ENCODE measurements at regions of chr9 and their contacts with region 1.

Region 1: GRCh38 chr9:97468658-97469448 is 32.6 kb upstream of the TMOD1 start:
- DNase-seq: peak; percentile 46 to 79
- H3K4me3 ChIP-seq: no peak overlapping the region
- H3K27ac ChIP-seq: no peak overlapping the region
- H3K4me1 ChIP-seq: no peaks in the 10 kb centered on the region
- H3K27me3 ChIP-seq: no peaks in the 10 kb centered on the region
- CTCF ChIP-seq: peak; percentile 90 to 96 (median 93)
- EP300 ChIP-seq: no peak
- POLR2A ChIP-seq: no peak
- RAD21 ChIP-seq: peak; percentile 100

Region 2: GRCh38 chr9:97419309-97419867 is 49.5 kb before region 1 on chr9:
- CTCF ChIA-PET with region 1: interaction called, 15 read pairs
- POLR2A ChIA-PET with region 1: no interaction called
- DNase-seq: no peak
- H3K4me3 ChIP-seq: no peak overlapping the region
- H3K27ac ChIP-seq: no peak overlapping the region
- H3K4me1 ChIP-seq: no peaks in the 10 kb centered on the region
- H3K27me3 ChIP-seq: no peaks in the 10 kb centered on the region
- CTCF ChIP-seq: no peak
- EP300 ChIP-seq: no peak
- POLR2A ChIP-seq: no peak
- RAD21 ChIP-seq: no peak

Region 3: GRCh38 chr9:97501177-97501971 is 32.5 kb after region 1 on chr9 and contains the start of gene TMOD1:
- CTCF ChIA-PET with region 1: interaction called, 53 read pairs
- POLR2A ChIA-PET with region 1: interaction called, 3 read pairs
- DNase-seq: peak in 1 of 2 experiments; percentile 80
- H3K4me3 ChIP-seq: peak within 1 kb of the TSS; percentile 50 to 69 (median 60)
- H3K27ac ChIP-seq: no peak within 1 kb of the TSS
- H3K4me1 ChIP-seq: peaks cover 0 to 6% (median 5%) of the 10 kb centered on the region in 4 experiments; a peak in 5 of 7 replicates
- H3K27me3 ChIP-seq: peaks cover 39 to 60% (median 50%) of the 10 kb centered on the region in 4 experiments
- CTCF ChIP-seq: peak in 2 of 3 experiments; percentile 14 to 15; a peak in 2 of 4 replicates
- EP300 ChIP-seq: no peak
- POLR2A ChIP-seq: no peak
- RAD21 ChIP-seq: no peak
- total RNA-seq, gene TMOD1: 0.88 and 1.1 TPM in 2 replicates

Region 4: GRCh38 chr9:97518909-97519307 is 50.1 kb after region 1 on chr9:
- CTCF ChIA-PET with region 1: interaction called, 15 read pairs
- POLR2A ChIA-PET with region 1: no interaction called
- DNase-seq: no peak
- H3K4me3 ChIP-seq: no peak overlapping the region
- H3K27ac ChIP-seq: no peak overlapping the region
- H3K4me1 ChIP-seq: peaks cover 0 to 2% (median 0%) of the 10 kb centered on the region in 4 experiments; a peak in 1 of 7 replicates
- H3K27me3 ChIP-seq: no peaks in the 10 kb centered on the region; a peak in 1 of 7 replicates
- CTCF ChIP-seq: no peak
- EP300 ChIP-seq: no peak
- POLR2A ChIP-seq: no peak
- RAD21 ChIP-seq: no peak

Region 5: GRCh38 chr9:97575673-97576200 is 106.9 kb after region 1 on chr9:
- CTCF ChIA-PET with region 1: interaction called, 21 read pairs
- POLR2A ChIA-PET with region 1: no interaction called
- DNase-seq: peak in 1 of 2 experiments; percentile 11
- H3K4me3 ChIP-seq: no peak overlapping the region
- H3K27ac ChIP-seq: no peak overlapping the region
- H3K4me1 ChIP-seq: no peaks in the 10 kb centered on the region
- H3K27me3 ChIP-seq: no peaks in the 10 kb centered on the region
- CTCF ChIP-seq: no peak
- EP300 ChIP-seq: no peak
- POLR2A ChIP-seq: no peak
- RAD21 ChIP-seq: no peak

Region 6: GRCh38 chr9:97615439-97616072 is 146.7 kb after region 1 on chr9:
- CTCF ChIA-PET with region 1: interaction called, 574 read pairs
- POLR2A ChIA-PET with region 1: interaction called, 3 read pairs
- DNase-seq: peak in 1 of 2 experiments; percentile 66
- H3K4me3 ChIP-seq: no peak overlapping the region
- H3K27ac ChIP-seq: no peak overlapping the region
- H3K4me1 ChIP-seq: no peaks in the 10 kb centered on the region
- H3K27me3 ChIP-seq: no peaks in the 10 kb centered on the region
- CTCF ChIP-seq: peak in 2 of 3 experiments; percentile 69 to 83; a peak in 3 of 4 replicates
- EP300 ChIP-seq: no peak
- POLR2A ChIP-seq: no peak
- RAD21 ChIP-seq: peak; percentile 76 to 84

Region 7: DNA sequence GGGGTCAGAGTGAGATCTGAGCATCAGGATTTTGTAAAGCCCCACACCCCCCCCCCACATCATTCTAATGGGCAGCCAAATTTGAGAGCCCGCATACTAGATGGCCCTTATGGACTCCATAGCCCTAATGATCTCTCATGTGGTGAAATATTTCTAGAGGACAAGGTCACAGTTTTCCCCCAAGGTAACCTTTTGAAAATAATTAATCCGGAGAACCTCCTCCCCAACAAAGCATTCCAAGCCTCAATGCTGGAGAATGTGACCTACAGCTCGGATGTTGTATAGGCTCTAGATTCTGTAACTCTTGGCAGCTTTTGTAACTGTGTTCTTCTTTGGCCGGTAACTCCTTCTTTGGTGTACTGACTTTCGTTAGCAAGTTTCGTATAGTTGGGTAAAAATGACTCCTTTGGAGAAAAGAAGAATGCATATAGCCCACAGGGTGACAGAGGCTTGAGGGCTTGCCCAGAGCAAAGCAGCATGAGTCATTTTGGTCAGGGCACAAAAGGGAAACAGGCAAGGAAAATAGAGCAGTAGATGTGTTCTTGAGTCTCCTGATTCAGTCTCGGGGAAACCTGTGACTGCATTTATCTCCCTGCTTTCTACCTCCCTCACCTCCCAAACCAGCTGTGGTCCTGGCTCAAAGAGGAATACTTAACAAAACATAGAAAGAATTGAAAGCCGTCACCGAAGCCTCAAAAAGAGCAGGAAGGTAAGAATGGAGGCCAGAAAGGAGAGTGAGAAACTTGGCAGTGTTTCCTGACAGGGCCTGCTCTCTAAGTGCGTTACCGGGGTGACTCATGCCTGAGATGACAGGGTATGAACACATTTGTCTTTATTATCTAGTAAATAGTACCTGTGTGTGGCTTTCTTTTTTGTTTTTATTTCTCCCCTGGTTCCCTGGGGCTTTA is 234.8 kb after region 1 on chr9:
- CTCF ChIA-PET with region 1: no interaction called
- POLR2A ChIA-PET with region 1: no interaction called
- DNase-seq: no peak
- H3K4me3 ChIP-seq: no peak overlapping the region
- H3K27ac ChIP-seq: no peak overlapping the region
- H3K4me1 ChIP-seq: no peaks in the 10 kb centered on the region
- H3K27me3 ChIP-seq: no peaks in the 10 kb centered on the region; a peak in 1 of 7 replicates
- CTCF ChIP-seq: no peak
- EP300 ChIP-seq: no peak
- POLR2A ChIP-seq: no peak
- RAD21 ChIP-seq: no peak